AG04449 (cell line): ENCODE measurements at regions of chrX and their contacts with region 1.

Region 1: DNA sequence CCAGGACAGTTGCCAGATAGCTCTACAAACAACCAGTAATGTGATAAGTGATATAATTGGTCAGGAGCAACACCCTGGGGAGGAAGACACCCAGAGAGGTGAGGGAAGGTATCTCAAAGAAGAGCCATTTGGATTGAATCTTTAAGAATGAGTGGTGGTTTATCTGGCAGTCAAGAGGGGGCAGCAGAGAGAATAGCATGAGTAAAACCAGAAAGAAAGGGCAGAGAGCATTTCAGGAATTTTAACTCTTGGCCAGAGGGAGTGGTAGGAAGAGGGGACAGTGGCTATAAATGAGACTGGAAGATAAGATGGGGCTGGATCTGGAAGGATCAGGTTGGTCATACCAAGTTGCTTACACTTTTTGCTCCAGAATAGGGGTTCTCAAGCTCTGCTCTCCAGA is 5.9 kb upstream of the SEPTIN6 start:
- DNase-seq: no peak
- H3K4me3 ChIP-seq: no peak overlapping the region
- CTCF ChIP-seq: peak; percentile 42

Region 2: GRCh38 chrX:119661486-119661885 is 37.4 kb before region 1 on chrX:
- CTCF ChIA-PET with region 1: no interaction called
- POLR2A ChIA-PET with region 1: no interaction called
- DNase-seq: no peak
- H3K4me3 ChIP-seq: no peak overlapping the region
- CTCF ChIP-seq: no peak

Region 3: GRCh38 chrX:119685225-119686066 is 13.4 kb before region 1 on chrX:
- CTCF ChIA-PET with region 1: interaction called, 10 read pairs
- POLR2A ChIA-PET with region 1: no interaction called
- DNase-seq: no peak
- H3K4me3 ChIP-seq: no peak overlapping the region
- CTCF ChIP-seq: no peak